Mammary epithelial cell (primary cell): ENCODE measurements at regions of chr14 and their contacts with region 1.

Region 1: GRCh38 chr14:87615822-87616679 is 376.9 kb downstream of the GALC start:
- DNase-seq: peak; percentile 37
- H3K4me3 ChIP-seq: no peak overlapping the region
- H3K27ac ChIP-seq: no peak overlapping the region
- H3K4me1 ChIP-seq: no peaks in the 10 kb centered on the region
- H3K27me3 ChIP-seq: no peaks in the 10 kb centered on the region
- CTCF ChIP-seq: peak; percentile 75 to 87

Region 2: DNA sequence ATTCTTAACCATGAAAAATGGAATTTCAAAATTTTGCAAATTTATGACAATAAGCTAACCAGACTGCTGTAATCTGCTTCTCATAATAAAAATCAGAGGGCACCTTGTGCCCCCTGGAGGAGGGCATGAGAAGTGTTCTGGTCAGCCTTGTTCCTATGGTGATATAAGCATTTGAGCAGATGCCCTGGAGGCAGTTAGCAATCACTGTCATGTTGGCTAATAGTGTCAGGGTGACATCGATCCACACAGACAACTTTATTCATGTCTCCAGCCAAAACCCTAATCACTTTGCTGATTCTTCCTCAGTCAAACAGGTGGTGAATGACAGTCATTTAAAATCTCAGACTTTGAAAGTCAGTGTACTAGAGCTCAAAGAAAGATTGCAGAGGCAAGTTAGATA is 566.1 kb before region 1 on chr14:
- CTCF ChIA-PET with region 1: no interaction called
- dilution Hi-C with region 1: no loop called
- in situ Hi-C with region 1: no loop called
- intact Hi-C with region 1: loop called (anchors 5 kb)
- DNase-seq: peak; percentile 75
- H3K4me3 ChIP-seq: no peak overlapping the region
- H3K27ac ChIP-seq: no peak overlapping the region
- H3K4me1 ChIP-seq: peaks cover 6% of the 10 kb centered on the region
- H3K27me3 ChIP-seq: no peaks in the 10 kb centered on the region
- CTCF ChIP-seq: peak; percentile 82 to 86

Region 3: DNA sequence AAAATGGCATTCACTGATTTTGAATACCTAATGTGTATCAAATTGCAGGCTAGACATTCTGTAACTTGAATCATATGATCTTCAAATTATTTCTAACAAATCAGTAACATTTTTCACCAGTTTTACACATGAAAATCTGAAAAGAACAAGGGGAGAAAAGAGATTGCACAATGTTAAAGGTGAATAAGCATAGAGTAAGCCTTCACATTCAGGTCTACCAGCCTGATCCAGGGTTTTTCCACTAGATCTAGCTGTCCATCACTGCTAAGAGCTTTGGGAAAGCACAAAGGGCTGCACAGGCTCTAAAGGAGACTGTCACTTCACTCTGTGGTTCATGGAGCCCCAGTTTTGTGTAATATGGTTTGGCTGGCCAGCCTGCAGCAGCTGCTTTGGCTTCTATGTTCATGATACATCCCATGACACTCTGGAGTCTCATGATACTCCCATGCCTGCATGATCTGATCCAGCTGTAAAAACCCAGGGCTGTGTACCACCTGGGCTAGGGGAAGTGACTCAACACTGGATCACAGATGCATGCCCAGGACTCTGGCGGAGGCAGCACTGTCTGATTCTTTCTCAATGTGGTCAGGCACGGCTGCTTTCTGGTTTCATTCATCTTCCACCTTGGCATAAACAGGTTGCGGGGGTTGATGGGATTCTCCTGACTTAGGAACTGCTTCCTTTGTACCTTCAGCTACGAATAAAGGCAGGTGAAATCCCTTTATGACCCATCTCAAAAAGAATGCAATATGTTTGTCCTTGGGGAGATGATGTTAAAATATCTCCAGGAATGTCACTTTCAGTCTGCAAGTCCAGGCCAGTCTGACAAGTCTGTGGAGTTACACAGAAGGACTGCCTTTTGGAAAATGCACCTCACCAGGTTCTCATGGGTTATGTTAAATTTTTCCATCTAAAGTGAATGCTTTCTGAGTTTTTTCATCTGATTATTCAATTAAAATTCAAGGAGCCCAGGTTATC is 482.7 kb before region 1 on chr14:
- CTCF ChIA-PET with region 1: no interaction called
- dilution Hi-C with region 1: no loop called
- in situ Hi-C with region 1: no loop called
- intact Hi-C with region 1: loop called (anchors 5 kb)
- DNase-seq: peak; percentile 100
- H3K4me3 ChIP-seq: peak overlapping the region in 1 of 3 experiments; percentile 23
- H3K27ac ChIP-seq: peak overlapping the region; percentile 88
- H3K4me1 ChIP-seq: peaks cover 32% of the 10 kb centered on the region
- H3K27me3 ChIP-seq: no peaks in the 10 kb centered on the region
- CTCF ChIP-seq: no peak

Region 4: DNA sequence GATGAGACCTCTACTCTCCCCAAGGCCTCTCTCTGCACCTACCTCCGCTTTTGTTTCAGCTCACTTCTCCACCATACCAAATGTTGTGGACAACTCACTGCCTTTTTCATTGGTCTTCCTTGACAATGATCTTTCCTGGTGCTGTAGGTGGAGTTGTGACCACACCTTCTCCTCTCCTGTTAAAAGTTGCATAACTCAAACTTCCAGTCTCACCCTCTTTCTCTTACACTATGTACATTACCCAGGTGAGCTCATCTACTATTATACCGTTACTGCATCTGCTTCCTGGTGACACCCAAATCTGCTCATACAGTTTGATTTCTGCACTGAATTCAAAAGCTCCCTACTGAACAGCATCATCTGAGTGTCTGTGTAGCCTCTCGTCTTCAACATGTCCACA is 165.9 kb before region 1 on chr14:
- CTCF ChIA-PET with region 1: no interaction called
- dilution Hi-C with region 1: no loop called
- in situ Hi-C with region 1: no loop called
- intact Hi-C with region 1: loop called (anchors 1 kb)
- DNase-seq: peak; percentile 59
- H3K4me3 ChIP-seq: no peak overlapping the region
- H3K27ac ChIP-seq: no peak overlapping the region
- H3K4me1 ChIP-seq: peaks cover 16% of the 10 kb centered on the region
- H3K27me3 ChIP-seq: no peaks in the 10 kb centered on the region
- CTCF ChIP-seq: no peak

Region 5: DNA sequence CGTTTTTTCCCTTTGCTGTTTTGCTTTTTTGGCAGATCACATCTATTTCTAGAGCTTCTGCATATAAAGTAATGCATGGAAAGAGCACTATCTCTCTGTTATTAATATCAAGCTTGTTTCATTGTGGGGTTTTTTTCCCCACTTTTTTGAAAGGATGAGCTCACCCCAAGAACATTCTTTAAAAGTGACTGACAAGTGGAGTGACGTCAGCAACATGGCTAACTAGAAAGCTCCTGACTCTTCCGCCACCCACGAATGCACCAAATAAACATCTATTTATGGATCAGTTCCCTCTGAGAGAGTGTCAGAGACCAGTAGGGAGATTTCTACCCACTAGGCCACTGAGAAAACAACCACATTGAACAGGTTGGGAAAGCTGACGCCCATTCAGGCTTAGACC is 68.5 kb before region 1 on chr14:
- CTCF ChIA-PET with region 1: no interaction called
- dilution Hi-C with region 1: no loop called
- in situ Hi-C with region 1: no loop called
- intact Hi-C with region 1: no loop called
- DNase-seq: no peak
- H3K4me3 ChIP-seq: no peak overlapping the region
- H3K27ac ChIP-seq: no peak overlapping the region
- H3K4me1 ChIP-seq: no peaks in the 10 kb centered on the region
- H3K27me3 ChIP-seq: peaks cover 2% of the 10 kb centered on the region
- CTCF ChIP-seq: no peak

Region 6: DNA sequence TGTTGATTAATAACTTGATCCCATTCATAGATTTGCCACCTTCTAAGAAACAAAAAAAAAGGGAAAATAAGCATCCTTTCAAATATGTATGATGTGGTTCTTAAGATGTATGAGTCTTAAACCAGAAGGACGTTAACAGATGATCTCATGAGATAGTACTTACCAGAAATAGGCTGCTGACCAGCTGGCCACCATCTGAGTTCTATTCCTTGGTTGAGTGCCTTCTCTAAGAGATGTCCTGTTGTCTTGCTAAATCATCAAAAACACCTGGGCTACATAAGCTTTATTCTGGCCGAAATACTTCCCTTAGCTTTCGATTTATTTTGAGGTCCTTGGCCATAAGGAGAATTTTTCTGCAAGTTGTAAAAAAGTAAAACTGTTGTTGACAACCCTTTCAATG is 444.5 kb after region 1 on chr14:
- CTCF ChIA-PET with region 1: no interaction called
- dilution Hi-C with region 1: no loop called
- in situ Hi-C with region 1: no loop called
- intact Hi-C with region 1: no loop called
- DNase-seq: no peak
- H3K4me3 ChIP-seq: no peak overlapping the region
- H3K27ac ChIP-seq: no peak overlapping the region
- H3K4me1 ChIP-seq: no peaks in the 10 kb centered on the region
- H3K27me3 ChIP-seq: no peaks in the 10 kb centered on the region
- CTCF ChIP-seq: no peak